ENCODE measurements at regions of chr6 and their contacts with region 1.

Region 1: DNA sequence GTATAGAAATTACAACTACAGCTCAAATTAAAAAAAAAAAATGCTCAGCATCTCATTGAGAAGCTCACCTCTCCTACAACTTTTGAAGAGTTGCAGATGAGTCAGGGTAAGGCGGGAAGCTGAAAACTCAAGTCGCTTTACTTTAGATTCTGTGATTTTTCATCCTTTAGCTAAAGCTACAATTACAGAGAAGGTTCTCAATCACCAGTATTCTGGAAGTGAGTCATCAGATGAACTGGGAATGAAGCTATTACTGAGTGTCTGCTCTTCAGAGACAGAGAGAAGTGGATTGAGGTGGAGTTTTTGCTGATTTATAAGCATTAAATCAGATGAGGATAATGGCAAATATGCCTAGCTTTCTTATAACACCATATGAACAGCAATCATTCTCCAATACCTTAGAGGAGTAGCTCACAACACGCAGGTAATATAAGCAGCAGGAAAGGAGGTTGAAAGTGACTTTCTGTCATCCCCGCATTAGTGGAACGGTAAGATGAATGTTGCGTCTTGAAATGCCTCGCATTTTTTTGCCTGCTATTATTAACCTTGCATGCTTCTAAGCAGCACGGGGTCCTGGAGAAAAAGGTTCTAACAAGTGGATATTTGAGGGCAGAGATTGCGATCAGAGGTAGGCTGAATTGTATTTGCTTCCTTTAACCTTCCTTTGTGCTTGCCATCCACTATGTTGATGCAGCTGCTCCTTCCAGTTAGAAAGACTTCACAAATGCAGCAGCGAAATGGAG is 91.7 kb downstream of the TFAP2A start:
- DNase-seq: no peak
- H3K4me3 ChIP-seq: no peak overlapping the region
- H3K27ac ChIP-seq: no peak overlapping the region
- H3K4me1 ChIP-seq: no peaks in the 10 kb centered on the region
- H3K27me3 ChIP-seq: no peaks in the 10 kb centered on the region
- CTCF ChIP-seq: no peak
- EP300 ChIP-seq: no peak
- POLR2A ChIP-seq: no peak

Region 2: DNA sequence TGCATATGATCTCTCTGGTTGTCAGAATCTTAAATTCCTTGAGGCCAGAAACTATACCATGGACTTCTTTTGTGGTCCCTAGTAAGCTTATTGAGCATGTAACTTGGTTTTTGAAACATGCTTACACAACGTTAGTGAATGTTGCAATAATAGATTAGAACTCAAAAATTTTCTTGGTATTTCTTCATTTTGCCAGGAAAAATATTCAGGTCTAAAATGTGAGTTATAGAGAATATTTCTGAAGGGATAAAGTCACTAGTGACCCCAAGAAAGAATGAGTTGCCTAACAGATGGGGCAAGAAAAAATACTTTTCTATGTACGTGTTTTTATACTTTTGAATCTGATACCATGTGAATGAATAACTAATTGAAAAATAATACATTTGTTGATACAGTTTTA is 103.7 kb before region 1 on chr6:
- in situ Hi-C with region 1: no loop called
- intact Hi-C with region 1: no loop called
- DNase-seq: no peak
- H3K4me3 ChIP-seq: no peak overlapping the region
- H3K27ac ChIP-seq: no peak overlapping the region
- H3K4me1 ChIP-seq: no peaks in the 10 kb centered on the region
- H3K27me3 ChIP-seq: no peaks in the 10 kb centered on the region
- CTCF ChIP-seq: no peak
- EP300 ChIP-seq: no peak
- POLR2A ChIP-seq: no peak

Region 3: DNA sequence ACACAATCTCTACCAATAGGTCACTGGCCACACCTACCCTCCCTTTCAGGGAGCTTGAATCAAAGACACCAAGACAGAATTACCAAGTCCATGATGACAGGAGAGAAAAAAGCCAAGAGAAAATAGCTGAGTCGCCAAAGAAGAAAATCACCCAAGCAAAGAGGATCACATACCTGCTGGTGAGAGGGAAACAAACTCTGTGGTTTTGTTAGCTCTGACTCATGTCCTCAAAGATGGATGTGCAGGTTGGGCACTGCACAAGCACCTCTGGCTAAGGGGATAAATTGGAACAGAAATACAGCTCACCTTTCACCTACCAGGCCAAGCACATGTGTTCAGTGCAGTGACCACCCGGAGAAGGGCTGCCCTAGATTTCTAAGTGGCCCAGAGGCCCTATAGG is 23.1 kb before region 1 on chr6:
- in situ Hi-C with region 1: no loop called
- intact Hi-C with region 1: no loop called
- DNase-seq: no peak
- H3K4me3 ChIP-seq: no peak overlapping the region
- H3K27ac ChIP-seq: no peak overlapping the region
- H3K4me1 ChIP-seq: no peaks in the 10 kb centered on the region
- H3K27me3 ChIP-seq: no peaks in the 10 kb centered on the region
- CTCF ChIP-seq: no peak
- EP300 ChIP-seq: no peak
- POLR2A ChIP-seq: no peak

Region 4: GRCh38 chr6:10351791-10352190 is 28.6 kb after region 1 on chr6:
- in situ Hi-C with region 1: no loop called
- intact Hi-C with region 1: loop called (anchors 1 kb)
- DNase-seq: no peak
- H3K4me3 ChIP-seq: no peak overlapping the region
- H3K27ac ChIP-seq: no peak overlapping the region
- H3K4me1 ChIP-seq: no peaks in the 10 kb centered on the region
- H3K27me3 ChIP-seq: no peaks in the 10 kb centered on the region
- CTCF ChIP-seq: no peak
- EP300 ChIP-seq: no peak
- POLR2A ChIP-seq: no peak

Measured in transverse colon (tissue), 4 donors.